Naive thymus-derived CD4-positive, alpha-beta T cell (primary cell): ENCODE measurements at regions of chr5 and their contacts with region 1.

Region 1: DNA sequence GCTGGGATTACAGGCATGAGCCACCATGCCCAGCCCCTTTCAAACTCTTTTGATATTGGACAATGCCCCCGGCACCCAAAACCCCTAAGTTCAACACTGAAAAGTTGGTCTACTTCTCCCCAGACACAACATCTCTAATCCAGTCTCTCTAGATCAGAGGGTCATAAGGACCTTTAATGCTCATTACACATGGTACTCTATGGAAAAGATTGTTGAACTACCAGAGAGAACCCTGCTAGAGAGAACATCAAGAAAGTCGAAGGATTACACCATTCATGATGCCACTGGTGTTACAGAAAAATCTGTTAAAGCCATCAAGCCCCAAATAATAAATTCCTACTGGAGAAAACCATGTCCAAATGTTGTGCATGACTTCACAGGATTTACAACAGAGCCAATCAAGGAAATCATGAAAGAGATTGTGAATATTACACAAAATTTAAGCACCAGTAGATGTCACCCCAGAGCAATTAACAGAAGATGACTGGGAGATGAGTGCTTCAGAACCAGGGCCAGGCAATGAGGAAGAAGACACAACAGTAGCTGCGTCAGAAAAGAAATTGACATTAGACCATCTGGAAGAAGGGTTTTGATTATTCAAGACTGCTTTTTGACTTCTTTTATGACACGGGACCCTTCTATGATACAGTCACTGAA is 28.3 kb upstream of the NIPAL4 start:
- DNase-seq: peak in 7 of 9 donors; percentile 19 to 60 (median 38)
- ATAC-seq: peak; percentile 91
- H3K4me3 ChIP-seq: no peak overlapping the region
- H3K4me3 Mint-ChIP-seq: peak overlapping the region in 1 of 10 donors; percentile 57
- H3K27ac ChIP-seq: no peak overlapping the region
- H3K27ac Mint-ChIP-seq: no peak overlapping the region
- H3K4me1 ChIP-seq: no peaks in the 10 kb centered on the region
- H3K4me1 Mint-ChIP-seq: peaks cover 0 to 9% (median 7%) of the 10 kb centered on the region in 7 donors
- H3K27me3 ChIP-seq: no peaks in the 10 kb centered on the region
- H3K27me3 Mint-ChIP-seq: peaks cover 0 to 28% (median 0%) of the 10 kb centered on the region in 5 donors

Region 2: GRCh38 chr5:157384971-157385709 is 46.5 kb before region 1 on chr5:
- CTCF ChIA-PET with region 1: no interaction called
- POLR2A ChIA-PET with region 1: no interaction called
- intact Hi-C with region 1: no loop called
- DNase-seq: no peak
- ATAC-seq: no peak
- H3K4me3 ChIP-seq: no peak overlapping the region
- H3K4me3 Mint-ChIP-seq: no peak overlapping the region
- H3K27ac ChIP-seq: no peak overlapping the region
- H3K27ac Mint-ChIP-seq: peak overlapping the region in 5 of 9 donors; percentile 21 to 73 (median 32)
- H3K4me1 ChIP-seq: peaks cover 0 to 6% of the 10 kb centered on the region in 2 donors
- H3K4me1 Mint-ChIP-seq: peaks cover 0 to 25% (median 3%) of the 10 kb centered on the region in 7 donors
- H3K27me3 ChIP-seq: no peaks in the 10 kb centered on the region
- H3K27me3 Mint-ChIP-seq: no peaks in the 10 kb centered on the region

Region 3: GRCh38 chr5:157471709-157472108 is 40.0 kb after region 1 on chr5:
- CTCF ChIA-PET with region 1: no interaction called
- POLR2A ChIA-PET with region 1: no interaction called
- intact Hi-C with region 1: loop called (anchors 2 to 5 kb)
- DNase-seq: no peak
- ATAC-seq: peak; percentile 57
- H3K4me3 ChIP-seq: no peak overlapping the region
- H3K4me3 Mint-ChIP-seq: no peak overlapping the region
- H3K27ac ChIP-seq: no peak overlapping the region
- H3K27ac Mint-ChIP-seq: no peak overlapping the region
- H3K4me1 ChIP-seq: no peaks in the 10 kb centered on the region
- H3K4me1 Mint-ChIP-seq: peaks cover 0 to 31% (median 0%) of the 10 kb centered on the region in 7 donors
- H3K27me3 ChIP-seq: no peaks in the 10 kb centered on the region
- H3K27me3 Mint-ChIP-seq: no peaks in the 10 kb centered on the region

Region 4: DNA sequence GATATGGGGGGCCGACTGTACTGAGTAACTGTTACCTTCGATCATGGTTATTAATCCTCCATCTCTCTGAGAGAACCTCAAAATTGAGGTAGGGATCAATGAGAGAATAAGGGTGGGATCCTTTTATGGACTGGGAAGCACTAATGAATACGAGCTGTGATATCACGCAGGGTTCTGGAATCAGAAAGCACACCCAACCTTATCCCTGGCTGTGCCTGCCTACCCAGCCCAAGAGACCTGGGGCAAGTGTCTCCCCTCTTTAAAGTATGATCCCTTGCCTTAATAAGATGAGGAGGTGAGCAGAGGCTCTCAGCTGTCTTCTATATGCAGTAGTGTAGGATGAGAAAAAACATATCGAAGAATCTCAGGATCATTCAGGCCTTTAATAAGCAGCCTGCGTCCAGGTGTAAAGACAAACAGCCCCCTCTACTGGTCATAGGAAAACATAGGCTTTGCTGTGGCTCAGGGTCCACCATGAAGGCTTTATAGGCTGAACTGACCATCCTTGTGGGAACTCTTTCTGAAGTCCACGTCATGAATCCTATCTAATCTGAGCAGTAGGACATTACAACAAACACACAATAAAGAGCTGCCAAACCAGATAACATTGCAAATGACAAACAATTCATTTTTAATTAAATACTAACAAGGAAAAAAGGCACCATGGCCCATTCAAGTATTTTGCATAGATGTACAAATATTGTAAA is 45.2 kb after region 1 on chr5:
- CTCF ChIA-PET with region 1: no interaction called
- POLR2A ChIA-PET with region 1: no interaction called
- intact Hi-C with region 1: loop called in 1 of 2 experiments (anchors 5 kb)
- DNase-seq: peak in 5 of 9 donors; percentile 14 to 34 (median 17)
- ATAC-seq: peak; percentile 60
- H3K4me3 ChIP-seq: no peak overlapping the region
- H3K4me3 Mint-ChIP-seq: no peak overlapping the region
- H3K27ac ChIP-seq: no peak overlapping the region
- H3K27ac Mint-ChIP-seq: peak overlapping the region in 1 of 9 donors; percentile 56
- H3K4me1 ChIP-seq: no peaks in the 10 kb centered on the region
- H3K4me1 Mint-ChIP-seq: peaks cover 0 to 79% (median 0%) of the 10 kb centered on the region in 7 donors
- H3K27me3 ChIP-seq: no peaks in the 10 kb centered on the region
- H3K27me3 Mint-ChIP-seq: no peaks in the 10 kb centered on the region

Region 5: GRCh38 chr5:157670662-157671591 is 239.3 kb after region 1 on chr5 and contains the start of gene C5orf52:
- CTCF ChIA-PET with region 1: no interaction called
- POLR2A ChIA-PET with region 1: no interaction called
- intact Hi-C with region 1: loop called in 1 of 2 experiments (anchors 5 kb)
- DNase-seq: peak in 1 of 9 donors; percentile 52
- ATAC-seq: peak; percentile 41
- H3K4me3 ChIP-seq: peak within 1 kb of the TSS; percentile 38
- H3K4me3 Mint-ChIP-seq: peak within 1 kb of the TSS; percentile 69 to 95 (median 82)
- H3K27ac ChIP-seq: no peak within 1 kb of the TSS
- H3K27ac Mint-ChIP-seq: peak within 1 kb of the TSS in 4 of 9 donors; percentile 4 to 85 (median 22)
- H3K4me1 ChIP-seq: peaks cover 0 to 8% of the 10 kb centered on the region in 2 donors
- H3K4me1 Mint-ChIP-seq: peaks cover 16 to 31% (median 25%) of the 10 kb centered on the region in 7 donors
- H3K27me3 ChIP-seq: peaks cover 0 to 15% of the 10 kb centered on the region in 2 donors
- H3K27me3 Mint-ChIP-seq: peaks cover 25 to 49% (median 44%) of the 10 kb centered on the region in 5 donors
- total RNA-seq, gene C5orf52: not detected